CD4-positive, alpha-beta T cell (primary cell): ENCODE measurements at regions of chr2 and their contacts with region 1.

Region 1: GRCh38 chr2:170928824-170929685 is at the start of gene GORASP2:
- DNase-seq: peak; percentile 94 to 100 (median 97)
- ATAC-seq: peak; percentile 90
- H3K4me3 ChIP-seq: peak within 1 kb of the TSS; percentile 91
- H3K4me3 Mint-ChIP-seq: peak within 1 kb of the TSS; percentile 97
- H3K27ac ChIP-seq: peak within 1 kb of the TSS; percentile 80 to 86
- H3K27ac Mint-ChIP-seq: peak within 1 kb of the TSS; percentile 94
- H3K4me1 ChIP-seq: peaks cover 12% of the 10 kb centered on the region
- H3K4me1 Mint-ChIP-seq: peaks cover 49% of the 10 kb centered on the region
- H3K27me3 ChIP-seq: no peaks in the 10 kb centered on the region
- H3K27me3 Mint-ChIP-seq: no peaks in the 10 kb centered on the region
- CTCF ChIP-seq: peak; percentile 97
- total RNA-seq, gene GORASP2: 87.3 to 95.7 TPM

Region 2: DNA sequence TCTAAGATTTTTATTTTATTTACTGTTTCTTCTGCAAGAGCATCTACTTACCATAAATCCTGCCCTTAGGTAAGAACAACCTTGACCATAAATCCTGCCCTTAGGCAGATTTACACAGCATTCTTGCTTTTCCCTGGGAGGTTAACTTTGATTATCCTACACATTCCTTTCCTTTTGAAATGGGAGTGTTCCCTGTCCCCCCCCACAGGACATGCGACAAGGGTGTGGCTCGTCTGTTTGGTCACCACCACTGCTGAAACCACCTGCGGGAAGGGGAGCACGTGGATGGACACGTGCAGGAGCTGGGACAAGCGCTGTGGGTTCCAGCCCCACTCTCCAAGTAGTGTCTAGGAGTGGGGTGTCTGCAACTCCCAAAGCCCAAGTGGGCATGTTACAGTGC is 453.2 kb before region 1 on chr2:
- CTCF ChIA-PET with region 1: no interaction called
- POLR2A ChIA-PET with region 1: no interaction called
- intact Hi-C with region 1: no loop called
- DNase-seq: no peak
- ATAC-seq: no peak
- H3K4me3 ChIP-seq: no peak overlapping the region
- H3K4me3 Mint-ChIP-seq: no peak overlapping the region
- H3K27ac ChIP-seq: no peak overlapping the region
- H3K27ac Mint-ChIP-seq: no peak overlapping the region
- H3K4me1 ChIP-seq: no peaks in the 10 kb centered on the region
- H3K4me1 Mint-ChIP-seq: no peaks in the 10 kb centered on the region
- H3K27me3 ChIP-seq: no peaks in the 10 kb centered on the region
- H3K27me3 Mint-ChIP-seq: peaks cover 5% of the 10 kb centered on the region
- CTCF ChIP-seq: no peak

Region 3: DNA sequence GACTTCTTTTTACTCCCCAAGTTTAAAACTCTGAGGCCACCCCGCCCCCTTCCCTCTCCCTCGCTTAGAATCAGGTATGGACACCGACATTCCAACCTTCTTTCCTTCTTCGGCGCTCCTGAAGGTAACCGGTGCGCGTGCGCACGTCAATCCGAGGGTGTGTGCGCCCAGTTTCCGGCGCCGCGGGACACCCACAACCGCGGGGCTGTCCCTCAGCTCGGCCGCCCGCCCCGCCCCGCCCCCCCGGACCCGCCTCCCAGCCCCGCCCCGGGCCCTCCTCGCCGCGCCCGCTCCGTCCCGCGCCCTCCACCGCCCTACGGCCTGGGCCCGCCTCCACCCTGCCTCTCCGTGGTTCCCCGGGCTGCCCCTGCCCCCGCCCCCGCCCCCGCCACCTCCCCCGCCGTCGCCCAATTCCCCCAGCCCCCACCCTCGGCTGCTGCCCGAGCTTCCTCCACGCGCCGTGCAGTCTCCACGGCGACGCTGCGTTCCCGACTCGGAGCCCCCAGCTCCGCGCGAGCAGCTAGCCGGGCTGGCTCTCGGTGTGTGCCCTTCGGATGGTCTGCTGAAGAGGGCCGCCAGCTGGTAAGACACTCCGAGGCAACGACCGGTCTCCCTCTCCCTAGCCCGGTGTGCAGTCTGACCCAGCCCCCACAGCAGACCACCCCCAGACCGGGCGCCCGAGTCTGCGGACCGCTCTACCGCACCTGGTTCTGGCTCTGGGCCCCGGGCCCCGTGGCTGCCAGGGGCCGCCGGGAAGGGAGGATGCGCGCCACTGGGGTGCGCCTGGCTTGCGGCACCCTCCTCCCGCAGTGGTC is 158.2 kb before region 1 on chr2:
- CTCF ChIA-PET with region 1: no interaction called
- POLR2A ChIA-PET with region 1: no interaction called
- intact Hi-C with region 1: loop called in 1 of 2 experiments (anchors 5 kb)
- DNase-seq: peak; percentile 14 to 85 (median 50)
- ATAC-seq: peak; percentile 80
- H3K4me3 ChIP-seq: peak overlapping the region; percentile 76
- H3K4me3 Mint-ChIP-seq: peak overlapping the region; percentile 88
- H3K27ac ChIP-seq: no peak overlapping the region
- H3K27ac Mint-ChIP-seq: no peak overlapping the region
- H3K4me1 ChIP-seq: peaks cover 14% of the 10 kb centered on the region
- H3K4me1 Mint-ChIP-seq: peaks cover 33% of the 10 kb centered on the region
- H3K27me3 ChIP-seq: no peaks in the 10 kb centered on the region
- H3K27me3 Mint-ChIP-seq: peaks cover 5% of the 10 kb centered on the region
- CTCF ChIP-seq: no peak

Region 4: GRCh38 chr2:170966648-170967436 is 37.8 kb after region 1 on chr2:
- CTCF ChIA-PET with region 1: interaction called, 4 read pairs
- POLR2A ChIA-PET with region 1: interaction called, 3 read pairs
- intact Hi-C with region 1: loop called in 1 of 2 experiments (anchors 5 kb)
- DNase-seq: peak in 1 of 14 experiments; percentile 11
- ATAC-seq: peak; percentile 63
- H3K4me3 ChIP-seq: no peak overlapping the region
- H3K4me3 Mint-ChIP-seq: no peak overlapping the region
- H3K27ac ChIP-seq: no peak overlapping the region
- H3K27ac Mint-ChIP-seq: peak overlapping the region; percentile 64
- H3K4me1 ChIP-seq: no peaks in the 10 kb centered on the region
- H3K4me1 Mint-ChIP-seq: no peaks in the 10 kb centered on the region
- H3K27me3 ChIP-seq: no peaks in the 10 kb centered on the region
- H3K27me3 Mint-ChIP-seq: no peaks in the 10 kb centered on the region
- CTCF ChIP-seq: peak; percentile 21

Region 5: DNA sequence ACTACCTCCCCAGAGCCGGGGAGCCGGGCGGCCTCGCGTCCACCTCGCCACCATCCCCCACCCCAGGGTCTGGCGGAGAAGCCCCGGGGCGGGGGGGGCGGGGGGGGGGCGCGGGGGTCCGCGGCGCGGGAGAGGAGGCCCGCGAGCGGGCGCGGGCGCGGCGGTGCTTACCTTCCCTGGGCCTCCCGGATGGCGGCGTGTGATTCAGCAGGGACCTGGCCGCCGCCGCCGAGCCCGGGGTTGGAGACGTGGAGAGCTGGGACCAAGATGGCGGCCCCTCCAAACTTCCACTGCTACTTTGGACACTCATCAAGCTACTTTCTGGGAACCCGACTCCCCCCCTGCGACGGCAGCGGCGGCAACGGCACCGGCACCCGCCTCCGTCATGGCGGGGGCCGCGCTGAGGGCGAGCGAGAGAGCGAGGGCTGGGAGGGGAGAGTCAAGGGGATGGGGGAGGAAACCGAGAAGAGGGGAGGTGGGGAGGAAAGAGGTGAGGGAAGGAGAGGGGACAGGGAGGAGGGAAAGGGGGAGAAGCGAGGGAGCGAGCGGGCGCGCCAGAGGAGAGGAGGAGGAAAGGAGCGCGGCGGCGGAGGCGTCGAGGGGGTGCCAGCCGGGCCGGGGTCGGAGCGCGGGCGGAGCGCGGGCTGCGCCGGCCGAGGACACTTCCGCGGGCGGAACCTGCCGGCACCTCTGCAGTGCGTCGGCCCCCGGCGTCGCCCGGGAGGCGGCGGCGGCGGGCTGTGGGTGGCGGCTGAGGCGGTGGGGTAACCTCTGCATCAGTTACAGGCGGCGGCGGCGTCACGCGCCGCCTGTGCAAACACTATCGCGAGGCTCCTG is 231.3 kb after region 1 on chr2 and contains the start of gene TLK1:
- CTCF ChIA-PET with region 1: interaction called, 27 read pairs
- POLR2A ChIA-PET with region 1: interaction called, 36 read pairs
- intact Hi-C with region 1: loop called (anchors 1 to 2 kb)
- DNase-seq: peak; percentile 52 to 91 (median 78)
- ATAC-seq: peak; percentile 65
- H3K4me3 ChIP-seq: peak within 1 kb of the TSS; percentile 86
- H3K4me3 Mint-ChIP-seq: peak within 1 kb of the TSS; percentile 96
- H3K27ac ChIP-seq: peak within 1 kb of the TSS; percentile 62 to 95
- H3K27ac Mint-ChIP-seq: peak within 1 kb of the TSS; percentile 95
- H3K4me1 ChIP-seq: peaks cover 30% of the 10 kb centered on the region
- H3K4me1 Mint-ChIP-seq: peaks cover 76% of the 10 kb centered on the region
- H3K27me3 ChIP-seq: no peaks in the 10 kb centered on the region
- H3K27me3 Mint-ChIP-seq: no peaks in the 10 kb centered on the region
- CTCF ChIP-seq: no peak
- total RNA-seq, gene TLK1: 135 to 138 TPM

Region 6: DNA sequence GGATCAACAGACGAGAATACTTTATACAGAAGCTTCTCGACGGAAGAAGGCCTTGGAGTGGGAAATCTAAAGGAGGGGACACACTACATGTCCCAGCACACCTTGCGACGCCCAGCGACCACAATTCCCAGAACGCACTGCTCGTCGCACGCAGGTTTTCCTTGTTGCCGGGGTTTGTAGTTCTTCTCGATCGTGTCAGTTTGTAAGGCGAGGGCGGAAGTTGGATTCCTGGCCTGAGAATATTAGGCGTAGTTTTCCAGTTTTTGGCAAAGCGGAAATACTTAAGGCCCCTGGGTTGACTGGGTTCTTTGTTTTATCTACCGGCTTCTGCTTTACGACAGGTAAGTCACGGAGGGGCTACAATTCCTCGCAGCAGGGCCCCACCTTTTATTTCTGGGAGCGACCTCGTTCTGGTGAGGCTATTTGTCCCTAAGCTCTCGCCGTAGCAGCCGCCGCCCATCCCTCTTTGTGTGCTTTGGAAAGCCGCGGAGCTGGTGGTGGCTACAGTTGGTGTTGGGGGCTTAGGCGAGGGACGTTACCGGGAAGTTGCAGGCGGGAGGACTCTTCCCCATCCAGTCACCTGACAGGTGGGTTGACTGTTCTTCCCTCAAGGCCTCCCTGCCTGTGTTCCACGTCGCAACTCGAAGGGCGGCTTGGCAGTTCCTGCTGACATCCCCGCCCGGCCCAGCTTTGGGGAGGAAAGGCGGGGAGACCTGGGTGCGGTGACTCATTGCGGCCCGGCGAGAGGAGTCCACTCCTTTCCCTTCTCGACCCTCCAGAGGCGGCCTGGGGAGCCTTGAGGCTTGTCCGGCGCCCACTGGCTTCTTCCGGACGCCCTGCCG is 758.5 kb after region 1 on chr2 and contains the start of gene DYNC1I2:
- CTCF ChIA-PET with region 1: interaction called, 6 read pairs
- POLR2A ChIA-PET with region 1: interaction called, 6 read pairs
- intact Hi-C with region 1: loop called in 1 of 2 experiments (anchors 5 kb)
- DNase-seq: peak; percentile 44 to 86 (median 60)
- ATAC-seq: peak; percentile 81
- H3K4me3 ChIP-seq: peak within 1 kb of the TSS; percentile 97
- H3K4me3 Mint-ChIP-seq: peak within 1 kb of the TSS; percentile 96
- H3K27ac ChIP-seq: peak within 1 kb of the TSS; percentile 49 to 52
- H3K27ac Mint-ChIP-seq: peak within 1 kb of the TSS; percentile 82
- H3K4me1 ChIP-seq: peaks cover 8% of the 10 kb centered on the region
- H3K4me1 Mint-ChIP-seq: peaks cover 36% of the 10 kb centered on the region
- H3K27me3 ChIP-seq: no peaks in the 10 kb centered on the region
- H3K27me3 Mint-ChIP-seq: no peaks in the 10 kb centered on the region
- CTCF ChIP-seq: no peak
- total RNA-seq, gene DYNC1I2: 10.5 to 11.6 TPM